ENCODE measurements at regions of chr4 and their contacts with region 1.

Region 1: GRCh38 chr4:83284193-83285054 is at the start of gene COQ2:
- DNase-seq: peak; percentile 82 to 97
- H3K4me3 ChIP-seq: peak within 1 kb of the TSS; percentile 86 to 91
- H3K27ac ChIP-seq: peak within 1 kb of the TSS; percentile 93 to 94
- H3K4me1 ChIP-seq: peaks cover 0 to 4% of the 10 kb centered on the region in 2 donors
- H3K27me3 ChIP-seq: no peaks in the 10 kb centered on the region
- CTCF ChIP-seq: peak; percentile 23 to 53 (median 36)
- total RNA-seq, gene COQ2: 9.7 TPM

Region 2: DNA sequence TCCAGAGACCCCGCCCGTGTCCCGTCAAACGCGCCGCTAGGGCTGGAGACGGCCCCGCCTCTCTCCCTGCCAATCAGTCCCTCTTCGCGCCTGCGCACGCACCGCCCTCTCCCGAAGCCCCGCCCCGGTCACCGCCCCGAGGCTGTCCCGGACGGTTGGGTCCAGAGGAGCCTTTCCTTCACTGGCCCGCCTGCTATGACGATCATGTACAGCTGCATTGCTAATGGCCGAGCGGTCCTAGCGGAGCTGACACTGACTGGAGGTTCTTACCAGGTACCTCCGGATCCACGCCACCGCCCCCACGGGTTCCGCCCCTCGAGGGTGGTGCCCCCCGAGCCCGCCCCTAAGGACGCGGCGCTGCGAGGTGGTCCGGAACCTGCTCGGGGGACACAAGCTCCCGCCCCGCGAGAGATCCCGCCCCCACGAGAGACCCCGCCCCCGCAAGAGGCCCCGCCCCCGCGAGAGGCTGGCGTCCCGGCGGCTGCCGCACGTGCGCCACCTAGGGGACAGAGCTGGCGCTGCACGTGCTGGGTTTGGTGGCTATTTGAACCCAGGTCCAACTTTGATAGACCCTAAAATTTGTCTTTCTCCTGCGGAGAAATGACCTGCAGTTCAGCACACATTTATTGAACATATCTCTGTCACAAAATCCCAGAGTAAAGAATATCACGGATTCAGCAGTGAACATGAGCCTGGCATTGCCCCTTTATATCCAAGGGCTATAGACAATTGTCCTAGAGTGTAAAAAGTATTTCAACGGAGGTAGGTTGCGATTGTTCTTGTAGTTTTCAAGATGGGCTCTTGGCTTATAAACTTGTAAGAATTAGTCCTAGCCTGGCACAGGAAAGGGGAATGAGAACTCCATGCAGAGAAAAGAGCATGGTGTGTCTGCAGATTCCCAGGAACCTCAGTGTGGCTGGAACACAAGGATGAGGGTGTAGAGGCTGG is 999.3 kb before region 1 on chr4:
- intact Hi-C with region 1: loop called (anchors 10 kb)
- DNase-seq: peak; percentile 99 to 100
- H3K4me3 ChIP-seq: peak overlapping the region; percentile 53 to 58
- H3K27ac ChIP-seq: peak overlapping the region; percentile 58 to 66
- H3K4me1 ChIP-seq: peaks cover 0 to 5% of the 10 kb centered on the region in 2 donors
- H3K27me3 ChIP-seq: no peaks in the 10 kb centered on the region
- CTCF ChIP-seq: peak; percentile 70 to 100 (median 100)

Region 3: DNA sequence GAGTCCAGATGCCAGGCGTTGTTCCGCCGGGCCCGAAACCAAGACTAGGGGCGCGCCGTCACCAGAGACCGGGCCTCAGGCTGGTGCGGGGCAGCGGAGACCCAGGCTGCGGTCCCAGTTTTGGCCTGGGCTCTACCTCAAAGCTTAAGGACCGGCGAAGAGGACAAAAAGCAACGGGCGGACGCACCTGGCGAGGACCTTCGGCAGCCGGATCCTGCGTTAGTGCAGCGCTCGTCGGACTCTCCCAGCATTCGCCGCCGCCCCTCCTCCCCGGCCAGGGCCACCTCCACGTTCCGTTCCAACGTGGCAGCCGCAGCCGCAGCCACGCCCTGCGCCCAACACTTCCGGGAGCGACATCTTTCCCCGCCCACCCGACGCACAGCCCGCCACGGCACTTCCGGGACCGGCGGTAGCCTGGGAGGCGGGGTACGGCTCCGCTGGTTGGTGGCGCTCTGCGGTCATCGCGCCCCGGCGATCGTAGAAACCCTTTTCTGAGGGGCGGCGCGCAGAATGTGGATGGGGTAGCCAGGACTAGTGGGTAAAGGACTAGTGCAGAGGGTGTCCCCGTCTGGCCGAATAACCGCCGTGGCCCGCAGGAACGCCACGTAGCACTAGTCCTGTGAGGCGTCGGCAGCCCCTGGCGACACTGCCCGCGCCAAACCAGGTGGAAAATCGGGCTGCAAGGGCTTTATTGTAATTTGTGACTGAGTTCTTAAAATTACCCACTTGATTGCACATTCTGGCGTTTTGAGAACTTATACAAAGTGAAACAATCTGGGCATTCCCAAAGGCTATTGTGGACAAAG is 393.3 kb before region 1 on chr4 and contains the start of gene SEC31A:
- intact Hi-C with region 1: loop called (anchors 5 kb)
- DNase-seq: peak; percentile 75 to 97
- H3K4me3 ChIP-seq: peak within 1 kb of the TSS; percentile 87 to 91
- H3K27ac ChIP-seq: peak within 1 kb of the TSS; percentile 98 to 99
- H3K4me1 ChIP-seq: peaks cover 8 to 11% of the 10 kb centered on the region in 2 donors
- H3K27me3 ChIP-seq: no peaks in the 10 kb centered on the region
- CTCF ChIP-seq: peak in 1 of 3 experiments; percentile 20
- total RNA-seq, gene SEC31A: 100 TPM

Region 4: GRCh38 chr4:83012687-83013419 is 271.6 kb before region 1 on chr4:
- intact Hi-C with region 1: loop called (anchors 1 kb)
- DNase-seq: peak; percentile 75 to 97
- H3K4me3 ChIP-seq: peak overlapping the region; percentile 78 to 88
- H3K27ac ChIP-seq: peak overlapping the region; percentile 71 to 89
- H3K4me1 ChIP-seq: peaks cover 0 to 19% of the 10 kb centered on the region in 2 donors
- H3K27me3 ChIP-seq: no peaks in the 10 kb centered on the region
- CTCF ChIP-seq: peak; percentile 60 to 70 (median 63)

Region 5: DNA sequence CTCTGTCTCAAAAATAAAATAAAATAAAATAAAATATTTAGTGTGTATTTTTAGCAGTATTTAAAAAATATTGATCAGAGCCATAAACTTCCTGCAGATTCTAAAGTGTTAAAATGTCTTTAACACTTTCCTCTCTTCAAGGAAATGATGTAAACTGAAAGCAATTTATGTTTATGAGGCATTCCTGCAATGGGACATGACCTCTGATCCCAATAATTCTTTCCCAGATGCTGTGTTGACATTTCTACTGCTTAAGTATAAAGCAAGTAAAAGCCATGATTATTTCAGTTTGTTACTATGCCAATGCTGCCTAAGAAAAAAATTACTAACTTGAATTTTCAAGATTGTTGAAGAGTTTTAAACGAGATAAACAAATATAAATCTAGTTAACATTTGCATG is 28.8 kb before region 1 on chr4:
- intact Hi-C with region 1: loop called (anchors 1 kb)
- DNase-seq: no peak
- H3K4me3 ChIP-seq: no peak overlapping the region
- H3K27ac ChIP-seq: no peak overlapping the region
- H3K4me1 ChIP-seq: peaks cover 0 to 7% of the 10 kb centered on the region in 2 donors
- H3K27me3 ChIP-seq: no peaks in the 10 kb centered on the region
- CTCF ChIP-seq: no peak

Measured in ascending aorta (tissue), 2 donors.